CD4-positive, alpha-beta T cell (primary cell): ENCODE measurements at regions of chr20 and their contacts with region 1.

Region 1: DNA sequence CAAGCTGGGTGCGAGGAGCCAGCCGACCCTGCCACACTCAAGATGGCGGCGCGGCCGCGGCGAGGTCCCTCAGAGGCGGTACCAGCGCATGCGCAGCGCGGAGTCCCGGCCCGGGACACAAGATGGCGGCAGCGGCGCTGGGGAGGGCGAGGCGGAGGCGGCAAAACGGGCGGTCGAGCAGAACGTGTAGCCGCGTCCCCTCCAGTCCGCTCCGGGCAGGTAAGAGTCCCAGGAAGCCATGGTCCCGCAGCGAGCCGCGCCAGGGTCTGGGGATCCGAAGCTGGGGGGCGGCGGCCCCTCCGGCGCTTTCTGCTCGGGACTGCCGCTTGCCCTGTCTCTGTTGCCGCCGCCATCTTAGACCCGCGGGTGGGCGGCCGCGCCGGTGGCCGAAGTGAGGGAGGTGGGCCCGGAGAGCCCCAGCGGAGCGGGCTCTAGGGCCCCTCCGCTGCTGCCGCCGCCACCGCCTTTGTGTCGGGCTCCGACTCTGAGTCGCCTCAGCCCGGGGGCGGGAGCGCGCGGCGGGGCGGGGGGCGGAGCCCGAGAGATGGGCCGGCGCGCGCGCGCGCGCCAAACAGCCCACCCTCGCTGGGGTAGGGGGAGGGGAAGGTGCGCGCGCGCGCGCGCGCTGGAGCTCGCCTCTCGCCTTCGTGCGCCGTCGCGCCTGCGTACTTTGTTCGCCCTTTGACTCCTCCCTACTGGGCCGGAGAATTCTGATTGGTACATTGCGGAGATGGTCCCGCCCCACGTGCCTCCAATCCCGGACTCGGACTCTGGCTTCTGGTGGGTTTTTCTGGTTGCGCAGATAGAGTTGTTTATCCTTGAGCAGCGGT is at the start of gene PCIF1:
- DNase-seq: peak; percentile 97 to 100 (median 98)
- ATAC-seq: peak; percentile 77
- H3K4me3 ChIP-seq: peak within 1 kb of the TSS; percentile 100
- H3K4me3 Mint-ChIP-seq: peak within 1 kb of the TSS; percentile 98
- H3K27ac ChIP-seq: peak within 1 kb of the TSS; percentile 96 to 99
- H3K27ac Mint-ChIP-seq: peak within 1 kb of the TSS; percentile 97
- H3K4me1 ChIP-seq: peaks cover 40% of the 10 kb centered on the region
- H3K4me1 Mint-ChIP-seq: peaks cover 34% of the 10 kb centered on the region
- H3K27me3 ChIP-seq: no peaks in the 10 kb centered on the region
- H3K27me3 Mint-ChIP-seq: no peaks in the 10 kb centered on the region
- CTCF ChIP-seq: no peak
- total RNA-seq, gene PCIF1: 100 TPM

Region 2: DNA sequence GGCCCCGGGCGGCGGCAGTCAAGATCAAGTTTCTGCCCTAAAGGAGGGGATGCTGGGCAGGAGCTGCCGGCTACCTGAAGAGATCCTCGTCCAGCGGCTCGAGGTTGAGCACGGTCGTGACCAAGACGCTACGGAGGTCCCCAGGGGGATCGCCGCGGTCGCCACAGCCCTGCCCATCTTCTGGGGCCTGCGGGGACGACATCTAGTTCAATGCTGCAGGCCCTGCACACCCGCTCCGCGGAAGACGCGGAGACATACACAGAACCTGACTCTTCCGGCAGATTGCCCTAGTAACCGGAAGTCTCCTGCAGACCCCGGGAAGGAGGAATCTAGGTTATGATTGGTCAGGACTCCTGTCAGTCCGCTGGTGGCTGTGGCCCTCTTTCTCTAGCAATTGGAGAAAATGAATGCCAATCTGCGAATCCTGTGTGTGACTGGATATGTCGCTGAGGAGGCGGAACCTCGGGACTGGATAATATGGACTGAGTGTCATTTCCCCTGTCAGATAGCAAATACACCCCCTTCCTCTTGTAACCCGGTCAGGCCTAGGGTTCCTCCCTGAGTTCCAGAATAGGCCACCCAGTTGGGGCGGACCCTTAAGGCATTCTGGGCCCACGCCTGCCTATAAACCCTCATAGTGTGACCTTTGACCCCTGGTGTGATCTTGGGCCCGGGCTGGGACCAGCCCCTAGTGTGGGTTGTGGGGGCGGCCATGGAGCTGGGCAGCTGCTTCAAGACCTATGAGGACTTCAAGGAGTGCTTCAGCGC is 77.5 kb before region 1 on chr20 and contains the starts of genes ACOT8 and ZSWIM3:
- CTCF ChIA-PET with region 1: no interaction called
- POLR2A ChIA-PET with region 1: interaction called, 39 read pairs
- intact Hi-C with region 1: loop called (anchors 1 kb)
- DNase-seq: peak; percentile 80 to 100 (median 90)
- ATAC-seq: peak; percentile 98
- H3K4me3 ChIP-seq: peak within 1 kb of the TSS; percentile 100
- H3K4me3 Mint-ChIP-seq: peak within 1 kb of the TSS; percentile 96
- H3K27ac ChIP-seq: peak within 1 kb of the TSS; percentile 88 to 94
- H3K27ac Mint-ChIP-seq: peak within 1 kb of the TSS; percentile 98
- H3K4me1 ChIP-seq: peaks cover 40% of the 10 kb centered on the region
- H3K4me1 Mint-ChIP-seq: peaks cover 52% of the 10 kb centered on the region
- H3K27me3 ChIP-seq: no peaks in the 10 kb centered on the region
- H3K27me3 Mint-ChIP-seq: no peaks in the 10 kb centered on the region
- CTCF ChIP-seq: no peak
- total RNA-seq, gene ACOT8: 19.1 to 19.9 TPM
- total RNA-seq, gene ZSWIM3: 0.36 to 0.44 TPM

Region 3: GRCh38 chr20:45905505-45906079 is 29.2 kb before region 1 on chr20:
- CTCF ChIA-PET with region 1: no interaction called
- POLR2A ChIA-PET with region 1: interaction called, 10 read pairs
- intact Hi-C with region 1: loop called in 1 of 2 experiments (anchors 2 kb)
- DNase-seq: no peak
- ATAC-seq: no peak
- H3K4me3 ChIP-seq: no peak overlapping the region
- H3K4me3 Mint-ChIP-seq: no peak overlapping the region
- H3K27ac ChIP-seq: no peak overlapping the region
- H3K27ac Mint-ChIP-seq: no peak overlapping the region
- H3K4me1 ChIP-seq: peaks cover 3% of the 10 kb centered on the region
- H3K4me1 Mint-ChIP-seq: peaks cover 2% of the 10 kb centered on the region
- H3K27me3 ChIP-seq: no peaks in the 10 kb centered on the region
- H3K27me3 Mint-ChIP-seq: no peaks in the 10 kb centered on the region
- CTCF ChIP-seq: no peak

Region 4: DNA sequence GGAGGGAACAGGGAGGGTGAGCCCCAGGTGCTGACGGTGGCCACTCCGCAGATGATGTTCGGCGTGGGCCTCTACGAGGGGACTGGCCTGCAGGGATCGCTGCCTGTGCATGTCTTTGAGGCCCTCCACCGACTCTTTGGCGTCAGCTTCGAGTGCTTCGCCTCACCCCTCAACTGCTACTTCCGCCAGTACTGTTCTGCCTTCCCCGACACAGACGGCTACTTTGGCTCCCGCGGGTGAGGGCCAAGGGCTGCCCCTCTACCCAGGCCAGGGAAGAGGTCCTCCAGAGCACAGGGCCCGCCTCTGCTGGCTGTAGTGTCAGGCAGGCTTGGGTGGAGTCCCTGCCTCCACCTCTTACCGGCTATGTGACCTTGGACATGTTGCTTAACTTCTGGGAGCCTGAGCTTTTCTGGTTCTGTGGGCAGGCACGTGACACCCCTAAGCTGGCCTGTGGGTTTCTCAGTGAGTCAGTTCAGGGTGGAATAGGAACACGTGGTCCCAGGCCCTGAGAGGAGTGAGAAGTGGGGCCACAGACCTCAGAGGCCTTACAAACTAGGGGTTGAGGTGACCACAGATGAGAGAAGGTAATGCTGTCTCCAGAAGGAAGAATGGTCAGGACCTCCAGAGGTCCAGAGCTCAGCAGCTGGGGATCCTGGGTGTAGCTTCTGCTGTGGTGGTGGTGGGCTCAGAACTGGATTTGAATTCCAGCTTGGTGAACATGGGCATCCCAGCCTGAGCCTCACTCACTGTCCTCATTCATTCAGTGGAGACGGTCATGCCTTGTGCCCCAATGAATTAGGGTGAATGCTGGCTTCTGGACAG is 11.6 kb after region 1 on chr20:
- CTCF ChIA-PET with region 1: no interaction called
- POLR2A ChIA-PET with region 1: interaction called, 120 read pairs
- intact Hi-C with region 1: no loop called
- DNase-seq: peak in 6 of 14 experiments; percentile 15 to 81 (median 50)
- ATAC-seq: peak; percentile 51
- H3K4me3 ChIP-seq: no peak overlapping the region
- H3K4me3 Mint-ChIP-seq: no peak overlapping the region
- H3K27ac ChIP-seq: no peak overlapping the region
- H3K27ac Mint-ChIP-seq: peak overlapping the region; percentile 27
- H3K4me1 ChIP-seq: peaks cover 22% of the 10 kb centered on the region
- H3K4me1 Mint-ChIP-seq: peaks cover 4% of the 10 kb centered on the region
- H3K27me3 ChIP-seq: no peaks in the 10 kb centered on the region
- H3K27me3 Mint-ChIP-seq: no peaks in the 10 kb centered on the region
- CTCF ChIP-seq: no peak

Region 5: GRCh38 chr20:46013826-46014516 is 79.2 kb after region 1 on chr20:
- CTCF ChIA-PET with region 1: no interaction called
- POLR2A ChIA-PET with region 1: interaction called, 11 read pairs
- intact Hi-C with region 1: no loop called
- DNase-seq: peak; percentile 46 to 88 (median 60)
- ATAC-seq: peak; percentile 57
- H3K4me3 ChIP-seq: peak overlapping the region; percentile 43
- H3K4me3 Mint-ChIP-seq: peak overlapping the region; percentile 35
- H3K27ac ChIP-seq: no peak overlapping the region
- H3K27ac Mint-ChIP-seq: no peak overlapping the region
- H3K4me1 ChIP-seq: peaks cover 55% of the 10 kb centered on the region
- H3K4me1 Mint-ChIP-seq: peaks cover 62% of the 10 kb centered on the region
- H3K27me3 ChIP-seq: peaks cover 41 to 48% of the 10 kb centered on the region in 2 experiments
- H3K27me3 Mint-ChIP-seq: peaks cover 86% of the 10 kb centered on the region
- CTCF ChIP-seq: peak; percentile 96

Region 6: GRCh38 chr20:46243707-46244628 is 309.2 kb after region 1 on chr20:
- CTCF ChIA-PET with region 1: no interaction called
- POLR2A ChIA-PET with region 1: no interaction called
- intact Hi-C with region 1: no loop called
- DNase-seq: no peak
- ATAC-seq: no peak
- H3K4me3 ChIP-seq: no peak overlapping the region
- H3K4me3 Mint-ChIP-seq: no peak overlapping the region
- H3K27ac ChIP-seq: no peak overlapping the region
- H3K27ac Mint-ChIP-seq: no peak overlapping the region
- H3K4me1 ChIP-seq: peaks cover 4% of the 10 kb centered on the region
- H3K4me1 Mint-ChIP-seq: no peaks in the 10 kb centered on the region
- H3K27me3 ChIP-seq: peaks cover 32 to 34% of the 10 kb centered on the region in 2 experiments
- H3K27me3 Mint-ChIP-seq: peaks cover 68% of the 10 kb centered on the region
- CTCF ChIP-seq: no peak

Region 7: GRCh38 chr20:46363800-46364634 is 429.2 kb after region 1 on chr20:
- CTCF ChIA-PET with region 1: no interaction called
- POLR2A ChIA-PET with region 1: interaction called, 12 read pairs
- intact Hi-C with region 1: loop called in 1 of 2 experiments (anchors 5 kb)
- DNase-seq: peak; percentile 78 to 94 (median 84)
- ATAC-seq: peak; percentile 73
- H3K4me3 ChIP-seq: peak overlapping the region; percentile 96
- H3K4me3 Mint-ChIP-seq: peak overlapping the region; percentile 90
- H3K27ac ChIP-seq: peak overlapping the region; percentile 100
- H3K27ac Mint-ChIP-seq: peak overlapping the region; percentile 84
- H3K4me1 ChIP-seq: peaks cover 81% of the 10 kb centered on the region
- H3K4me1 Mint-ChIP-seq: peaks cover 77% of the 10 kb centered on the region
- H3K27me3 ChIP-seq: no peaks in the 10 kb centered on the region
- H3K27me3 Mint-ChIP-seq: no peaks in the 10 kb centered on the region
- CTCF ChIP-seq: no peak